Esophagus muscularis mucosa (tissue), 4 donors: ENCODE measurements at regions of chr18 and their contacts with region 1.

Region 1: GRCh38 chr18:50203801-50204604 is 9.1 kb upstream of the MYO5B start:
- DNase-seq: no peak
- H3K4me3 ChIP-seq: no peak overlapping the region
- H3K27ac ChIP-seq: no peak overlapping the region
- H3K4me1 ChIP-seq: peaks cover 0 to 32% (median 22%) of the 10 kb centered on the region in 4 donors
- H3K27me3 ChIP-seq: peaks cover 0 to 13% (median 1%) of the 10 kb centered on the region in 4 donors
- CTCF ChIP-seq: peak; percentile 57 to 70 (median 59)
- EP300 ChIP-seq: no peak
- POLR2A ChIP-seq: no peak

Region 2: DNA sequence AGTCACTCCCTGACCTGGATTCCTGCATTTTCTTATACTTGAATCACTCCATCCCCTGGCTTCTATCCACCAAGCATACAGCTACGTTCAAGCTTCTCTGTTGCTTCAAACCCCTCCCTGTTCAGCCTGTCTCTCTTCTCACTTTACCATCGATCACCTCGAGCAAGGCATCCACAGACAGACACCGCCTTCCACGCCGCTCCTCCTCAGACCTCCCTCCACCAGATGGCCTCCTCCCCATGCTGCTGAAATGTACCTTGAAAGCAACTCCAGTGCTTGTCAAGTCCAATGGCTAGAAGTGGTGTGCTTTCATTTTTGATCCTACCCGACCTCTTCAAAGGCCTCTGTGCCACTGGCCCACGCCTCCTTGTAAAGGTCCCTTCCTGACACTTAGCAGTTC is 259.3 kb before region 1 on chr18:
- intact Hi-C with region 1: loop called (anchors 1 kb)
- DNase-seq: no peak
- H3K4me3 ChIP-seq: no peak overlapping the region
- H3K27ac ChIP-seq: no peak overlapping the region
- H3K4me1 ChIP-seq: no peaks in the 10 kb centered on the region
- H3K27me3 ChIP-seq: no peaks in the 10 kb centered on the region
- CTCF ChIP-seq: peak; percentile 52 to 61 (median 55)
- EP300 ChIP-seq: no peak
- POLR2A ChIP-seq: no peak

Region 3: GRCh38 chr18:50009773-50010335 is 194.1 kb before region 1 on chr18:
- intact Hi-C with region 1: loop called (anchors 2 kb)
- DNase-seq: no peak
- H3K4me3 ChIP-seq: no peak overlapping the region
- H3K27ac ChIP-seq: no peak overlapping the region
- H3K4me1 ChIP-seq: peaks cover 0 to 44% (median 39%) of the 10 kb centered on the region in 4 donors
- H3K27me3 ChIP-seq: no peaks in the 10 kb centered on the region
- CTCF ChIP-seq: peak; percentile 33 to 60 (median 34)
- EP300 ChIP-seq: no peak
- POLR2A ChIP-seq: no peak